Gastrocnemius medialis (tissue), 4 donors: ENCODE measurements at regions of chr5 and their contacts with region 1.

Region 1: DNA sequence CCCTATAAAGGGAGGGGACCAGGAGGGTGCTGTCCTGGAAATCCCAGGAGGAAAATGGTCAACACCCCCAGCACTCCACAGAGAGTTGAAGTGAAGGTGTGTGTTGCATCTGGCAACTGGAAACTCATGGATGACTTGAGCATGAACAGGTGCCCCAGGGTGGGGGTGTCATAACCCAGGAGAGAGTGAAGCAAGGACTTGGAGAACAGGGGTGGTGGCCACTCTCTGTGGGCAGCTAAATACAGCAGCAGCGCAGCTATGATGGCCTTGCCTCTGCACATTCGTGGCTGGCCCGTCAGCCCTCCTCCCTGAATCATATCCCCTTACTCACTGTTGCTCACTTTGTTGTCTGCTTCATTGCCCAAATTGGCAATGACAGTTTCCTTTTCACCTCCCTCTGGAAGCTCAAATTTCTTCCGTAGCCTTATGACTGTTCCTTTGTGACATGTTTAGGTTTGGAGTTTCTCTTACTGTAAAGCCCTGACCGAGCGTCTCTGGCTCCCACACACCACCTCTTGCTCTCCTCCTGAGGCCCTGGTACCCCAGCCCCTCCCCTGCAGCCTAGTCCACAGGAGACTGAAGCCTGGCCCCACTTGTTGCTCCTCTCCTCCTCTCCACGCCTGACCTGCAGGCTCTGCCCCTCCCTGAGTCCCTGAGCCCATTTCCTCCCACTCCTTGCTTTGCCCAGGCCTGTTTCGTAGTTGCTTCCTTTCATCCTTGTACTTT is 185.8 kb downstream of the CD180 start:
- DNase-seq: peak; percentile 74 to 93
- ATAC-seq: peak; percentile 76 to 81
- H3K4me3 ChIP-seq: peak overlapping the region; percentile 12 to 45 (median 34)
- H3K27ac ChIP-seq: peak overlapping the region; percentile 83 to 94 (median 90)
- H3K4me1 ChIP-seq: peaks cover 53 to 86% of the 10 kb centered on the region in 2 donors
- H3K27me3 ChIP-seq: no peaks in the 10 kb centered on the region
- CTCF ChIP-seq: no peak
- POLR2A ChIP-seq: peak; percentile 61 to 75

Region 2: DNA sequence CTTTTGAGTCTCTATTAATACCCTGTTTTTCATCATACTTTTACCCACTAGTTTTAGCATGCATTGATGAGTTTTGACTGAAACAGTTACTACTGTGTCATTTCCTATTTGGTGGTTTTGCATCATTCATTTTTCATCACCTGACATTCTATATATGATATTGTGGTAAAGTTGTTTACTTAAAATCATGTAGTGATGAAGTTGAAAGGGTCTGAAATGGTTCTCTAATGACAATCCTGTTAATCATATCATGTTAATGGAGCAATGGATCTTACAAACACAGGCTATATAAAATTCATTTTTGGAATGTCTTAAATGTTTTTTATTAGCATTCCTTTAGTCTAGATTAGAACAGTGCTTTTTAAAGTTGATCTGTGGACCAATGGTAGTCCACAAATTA is 1000.4 kb before region 1 on chr5:
- in situ Hi-C with region 1: no loop called
- intact Hi-C with region 1: no loop called
- DNase-seq: no peak
- ATAC-seq: no peak
- H3K4me3 ChIP-seq: no peak overlapping the region
- H3K27ac ChIP-seq: peak overlapping the region in 1 of 4 donors; percentile 1
- H3K4me1 ChIP-seq: peaks cover 13% of the 10 kb centered on the region in 2 donors
- H3K27me3 ChIP-seq: no peaks in the 10 kb centered on the region
- CTCF ChIP-seq: no peak
- POLR2A ChIP-seq: no peak

Region 3: GRCh38 chr5:67030289-67031056 is 19.6 kb after region 1 on chr5:
- in situ Hi-C with region 1: no loop called
- intact Hi-C with region 1: loop called (anchors 1 kb)
- DNase-seq: no peak
- ATAC-seq: no peak
- H3K4me3 ChIP-seq: no peak overlapping the region
- H3K27ac ChIP-seq: peak overlapping the region; percentile 69 to 75 (median 74)
- H3K4me1 ChIP-seq: peaks cover 61% of the 10 kb centered on the region in 2 donors
- H3K27me3 ChIP-seq: no peaks in the 10 kb centered on the region
- CTCF ChIP-seq: no peak
- POLR2A ChIP-seq: no peak

Region 4: GRCh38 chr5:67115246-67115645 is 104.4 kb after region 1 on chr5:
- in situ Hi-C with region 1: no loop called
- intact Hi-C with region 1: no loop called
- DNase-seq: no peak
- ATAC-seq: no peak
- H3K4me3 ChIP-seq: no peak overlapping the region
- H3K27ac ChIP-seq: no peak overlapping the region
- H3K4me1 ChIP-seq: no peaks in the 10 kb centered on the region
- H3K27me3 ChIP-seq: no peaks in the 10 kb centered on the region
- CTCF ChIP-seq: no peak
- POLR2A ChIP-seq: no peak

Region 5: DNA sequence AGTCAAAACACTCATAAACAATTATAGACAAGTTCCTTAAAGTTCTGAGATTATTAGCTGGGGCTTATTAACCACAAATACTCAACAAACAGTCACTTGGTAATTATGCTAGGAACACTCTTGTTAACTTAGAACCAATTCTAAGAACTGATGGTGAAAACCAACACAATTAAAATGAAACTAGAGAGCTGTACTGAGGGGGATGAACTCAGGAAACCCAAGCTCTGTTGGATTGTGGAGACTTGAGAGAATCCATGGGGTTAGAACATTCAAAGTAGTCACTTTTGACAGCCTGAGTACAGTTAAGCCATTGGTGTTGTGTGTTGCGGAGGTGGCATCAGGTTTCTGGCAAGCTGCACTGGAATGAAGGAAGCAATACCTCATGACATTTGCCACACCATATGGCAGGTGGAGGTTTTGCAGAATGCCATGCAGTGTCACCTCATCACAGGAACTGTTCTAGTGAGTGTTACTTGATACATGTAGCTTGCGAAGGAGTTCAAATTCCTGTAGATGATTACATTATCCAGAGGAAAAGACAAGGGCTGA is 666.6 kb after region 1 on chr5:
- in situ Hi-C with region 1: no loop called
- intact Hi-C with region 1: loop called (anchors 10 kb)
- DNase-seq: peak; percentile 92 to 96
- ATAC-seq: peak; percentile 97 to 99
- H3K4me3 ChIP-seq: no peak overlapping the region
- H3K27ac ChIP-seq: peak overlapping the region; percentile 81 to 82 (median 81)
- H3K4me1 ChIP-seq: peaks cover 20 to 26% of the 10 kb centered on the region in 2 donors
- H3K27me3 ChIP-seq: no peaks in the 10 kb centered on the region
- CTCF ChIP-seq: no peak
- POLR2A ChIP-seq: peak in 1 of 2 donors; percentile 30